Psoas muscle (tissue), 8 donors: ENCODE measurements at regions of chr4 and their contacts with region 1.

Region 1: GRCh38 chr4:143482840-143483239 is 30.7 kb upstream of the SMARCA5 start:
- DNase-seq: no peak
- ATAC-seq: peak in 2 of 4 donors; percentile 39 to 78
- H3K4me3 ChIP-seq: no peak overlapping the region
- H3K27ac ChIP-seq: no peak overlapping the region
- H3K4me1 ChIP-seq: no peaks in the 10 kb centered on the region
- H3K27me3 ChIP-seq: no peaks in the 10 kb centered on the region
- CTCF ChIP-seq: peak; percentile 70

Region 2: GRCh38 chr4:142883040-142883832 is 599.6 kb before region 1 on chr4:
- intact Hi-C with region 1: loop called in 1 of 2 experiments (anchors 10 kb)
- DNase-seq: no peak
- ATAC-seq: peak in 2 of 4 donors; percentile 49 to 67
- H3K4me3 ChIP-seq: no peak overlapping the region
- H3K27ac ChIP-seq: no peak overlapping the region
- H3K4me1 ChIP-seq: no peaks in the 10 kb centered on the region
- H3K27me3 ChIP-seq: no peaks in the 10 kb centered on the region
- CTCF ChIP-seq: peak; percentile 49

Region 3: DNA sequence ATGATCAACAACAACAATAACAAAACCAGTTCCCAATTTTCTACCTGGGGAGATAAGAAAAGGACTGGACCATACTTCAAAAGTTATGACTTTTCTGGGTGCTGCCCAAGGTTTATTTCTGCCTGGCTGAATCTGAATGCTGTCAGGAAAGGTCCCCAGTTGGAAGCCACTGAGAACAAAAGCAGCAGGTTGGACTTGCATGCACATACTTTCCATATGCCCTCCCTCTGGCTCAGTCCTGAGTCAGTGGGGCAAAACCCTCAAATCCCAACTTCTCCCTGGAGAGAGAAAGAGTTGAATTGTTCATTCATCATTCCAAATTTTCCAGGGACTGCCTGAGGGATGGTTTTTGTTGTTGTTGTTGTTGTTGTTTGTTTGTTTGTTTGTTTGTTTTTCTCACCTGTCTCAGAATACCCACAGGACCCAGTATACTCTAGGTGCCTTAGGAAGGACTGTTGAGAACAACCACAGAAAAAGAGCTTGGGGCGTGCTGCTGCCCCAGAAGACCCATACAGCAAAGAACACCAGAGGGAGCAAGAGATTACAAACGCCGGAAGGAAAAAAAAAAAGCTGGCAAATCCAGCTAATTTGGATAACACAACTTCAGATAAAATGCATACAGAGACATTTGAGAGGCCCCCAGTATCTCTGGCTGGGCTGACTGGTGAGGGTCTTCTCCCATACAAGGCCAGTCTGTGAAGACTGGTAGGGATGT is 497.8 kb before region 1 on chr4:
- intact Hi-C with region 1: loop called in 1 of 2 experiments (anchors 10 kb)
- DNase-seq: no peak
- ATAC-seq: no peak
- H3K4me3 ChIP-seq: no peak overlapping the region
- H3K27ac ChIP-seq: no peak overlapping the region
- H3K4me1 ChIP-seq: no peaks in the 10 kb centered on the region
- H3K27me3 ChIP-seq: no peaks in the 10 kb centered on the region
- CTCF ChIP-seq: peak; percentile 29

Region 4: DNA sequence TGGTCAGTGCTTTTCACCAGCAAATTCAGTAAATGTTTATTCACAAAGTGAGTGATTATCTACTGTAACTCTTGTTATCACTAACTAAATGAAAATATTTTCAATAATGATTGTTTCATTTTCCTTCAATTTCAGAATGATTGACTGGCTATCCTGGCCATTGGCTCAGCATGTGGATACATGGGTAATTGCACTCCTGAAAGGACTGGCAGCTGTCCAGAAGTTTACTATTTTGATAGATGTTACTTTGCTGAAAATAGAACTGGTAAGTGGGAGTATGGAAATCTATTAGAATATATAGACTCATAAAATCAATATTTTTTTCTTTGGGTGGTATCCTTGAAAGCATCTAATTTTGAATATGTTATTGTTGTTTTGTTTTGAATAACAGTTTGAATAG is 287.3 kb before region 1 on chr4:
- intact Hi-C with region 1: loop called in 1 of 2 experiments (anchors 10 kb)
- DNase-seq: no peak
- ATAC-seq: peak in 1 of 4 donors; percentile 36
- H3K4me3 ChIP-seq: no peak overlapping the region
- H3K27ac ChIP-seq: no peak overlapping the region
- H3K4me1 ChIP-seq: peaks cover 44% of the 10 kb centered on the region
- H3K27me3 ChIP-seq: no peaks in the 10 kb centered on the region
- CTCF ChIP-seq: no peak

Region 5: GRCh38 chr4:143207557-143207956 is 275.3 kb before region 1 on chr4:
- intact Hi-C with region 1: loop called in 1 of 2 experiments (anchors 2 kb)
- DNase-seq: no peak
- ATAC-seq: peak in 2 of 4 donors; percentile 60 to 68
- H3K4me3 ChIP-seq: no peak overlapping the region
- H3K27ac ChIP-seq: peak overlapping the region; percentile 27
- H3K4me1 ChIP-seq: peaks cover 35% of the 10 kb centered on the region
- H3K27me3 ChIP-seq: no peaks in the 10 kb centered on the region
- CTCF ChIP-seq: peak; percentile 45

Region 6: GRCh38 chr4:143335979-143336780 is 146.7 kb before region 1 on chr4:
- intact Hi-C with region 1: loop called in 1 of 2 experiments (anchors 10 kb)
- DNase-seq: peak; percentile 89 to 93
- ATAC-seq: peak; percentile 86 to 88 (median 86)
- H3K4me3 ChIP-seq: peak overlapping the region; percentile 97
- H3K27ac ChIP-seq: peak overlapping the region; percentile 97
- H3K4me1 ChIP-seq: peaks cover 27% of the 10 kb centered on the region
- H3K27me3 ChIP-seq: no peaks in the 10 kb centered on the region
- CTCF ChIP-seq: no peak

Region 7: DNA sequence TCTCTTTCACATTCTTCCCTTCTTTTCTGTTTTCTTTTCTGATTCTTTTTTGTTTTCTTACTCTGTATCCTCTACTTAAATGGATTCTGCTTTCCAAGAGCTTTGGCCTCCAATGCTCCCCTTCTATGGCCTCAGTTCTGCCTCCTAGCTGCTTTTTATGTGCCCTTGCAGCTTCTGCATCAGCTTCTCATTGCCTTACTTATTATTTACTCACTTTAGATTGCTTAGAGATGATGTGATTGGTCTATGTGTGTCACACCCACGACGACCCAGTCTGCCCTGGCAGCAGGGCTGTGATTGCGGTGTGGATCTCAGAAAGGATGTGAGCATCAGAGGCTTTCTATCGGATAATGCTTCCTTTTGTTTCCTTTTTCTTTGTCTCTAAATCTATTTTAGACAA is 41.2 kb before region 1 on chr4:
- intact Hi-C with region 1: no loop called
- DNase-seq: no peak
- ATAC-seq: no peak
- H3K4me3 ChIP-seq: no peak overlapping the region
- H3K27ac ChIP-seq: no peak overlapping the region
- H3K4me1 ChIP-seq: no peaks in the 10 kb centered on the region
- H3K27me3 ChIP-seq: no peaks in the 10 kb centered on the region
- CTCF ChIP-seq: no peak